B cell (primary cell): ENCODE measurements at regions of chr11 and their contacts with region 1.

Region 1: DNA sequence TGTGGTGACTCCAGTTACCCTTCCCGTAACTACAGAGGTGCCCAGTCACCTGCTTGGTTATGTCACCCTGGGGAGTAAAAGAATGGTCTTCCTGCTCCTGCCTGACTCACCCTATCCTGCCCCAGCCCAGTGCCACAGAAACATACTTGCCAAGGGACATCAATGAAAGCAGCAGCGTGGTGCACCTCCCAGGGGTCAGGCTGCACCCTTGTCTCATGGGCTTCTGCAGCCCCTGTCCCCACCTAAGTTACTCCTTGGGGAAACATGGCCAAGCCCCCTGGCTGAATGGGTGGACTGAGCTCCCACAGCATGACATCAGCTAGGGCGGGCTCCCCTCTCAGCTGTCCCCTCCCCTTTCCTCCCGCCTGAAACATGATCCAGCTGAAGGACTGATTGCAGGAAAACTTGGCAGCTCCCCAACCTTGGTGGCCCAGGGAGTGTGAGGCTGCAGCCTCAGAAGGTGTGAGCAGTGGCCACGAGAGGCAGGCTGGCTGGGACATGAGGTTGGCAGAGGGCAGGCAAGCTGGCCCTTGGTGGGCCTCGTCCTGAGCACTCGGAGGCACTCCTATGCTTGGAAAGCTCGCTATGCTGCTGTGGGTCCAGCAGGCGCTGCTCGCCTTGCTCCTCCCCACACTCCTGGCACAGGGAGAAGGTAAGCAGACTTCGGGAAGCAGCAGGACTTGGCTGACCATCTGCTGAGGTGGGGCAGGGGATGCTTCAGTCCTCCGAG is at the start of gene HTR3A:
- DNase-seq: peak; percentile 16
- ATAC-seq: no peak
- H3K4me3 ChIP-seq: no peak within 1 kb of the TSS
- H3K4me3 Mint-ChIP-seq: peak within 1 kb of the TSS; percentile 48
- H3K27ac ChIP-seq: peak within 1 kb of the TSS in 1 of 2 donors; percentile 29
- H3K27ac Mint-ChIP-seq: peak within 1 kb of the TSS; percentile 91
- H3K4me1 ChIP-seq: peaks cover 56 to 77% of the 10 kb centered on the region in 2 donors
- H3K4me1 Mint-ChIP-seq: peaks cover 66% of the 10 kb centered on the region
- H3K27me3 ChIP-seq: no peaks in the 10 kb centered on the region
- H3K27me3 Mint-ChIP-seq: no peaks in the 10 kb centered on the region
- CTCF ChIP-seq: no peak
- total RNA-seq, gene HTR3A: 13.8 and 16.1 TPM in 2 replicates

Region 2: DNA sequence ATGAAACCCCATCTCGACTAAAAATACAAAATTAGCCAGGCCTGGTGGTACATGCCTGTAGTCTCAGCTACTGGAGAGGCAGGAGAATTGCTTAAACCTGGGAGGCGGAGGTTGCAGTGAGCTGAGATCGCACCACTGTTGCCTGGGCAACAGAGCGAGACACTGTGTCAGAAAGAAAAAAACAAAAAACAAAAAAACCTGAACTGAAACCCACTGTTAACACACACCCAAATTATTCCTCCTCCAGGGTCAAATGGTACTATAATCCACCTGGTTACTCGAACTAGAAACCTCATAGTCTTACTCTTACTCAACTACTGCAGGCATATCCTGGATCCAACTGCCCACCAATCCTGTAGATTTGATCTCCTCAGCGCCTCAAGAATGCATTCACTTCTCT is 135.1 kb before region 1 on chr11:
- CTCF ChIA-PET with region 1: no interaction called
- POLR2A ChIA-PET with region 1: no interaction called
- intact Hi-C with region 1: loop called (anchors 1 kb)
- DNase-seq: peak; percentile 85
- ATAC-seq: peak; percentile 93
- H3K4me3 ChIP-seq: peak overlapping the region in 1 of 5 experiments; percentile 52
- H3K4me3 Mint-ChIP-seq: peak overlapping the region; percentile 78
- H3K27ac ChIP-seq: peak overlapping the region; percentile 92
- H3K27ac Mint-ChIP-seq: peak overlapping the region; percentile 94
- H3K4me1 ChIP-seq: peaks cover 39 to 43% of the 10 kb centered on the region in 2 donors
- H3K4me1 Mint-ChIP-seq: peaks cover 30% of the 10 kb centered on the region
- H3K27me3 ChIP-seq: no peaks in the 10 kb centered on the region
- H3K27me3 Mint-ChIP-seq: no peaks in the 10 kb centered on the region
- CTCF ChIP-seq: no peak

Region 3: DNA sequence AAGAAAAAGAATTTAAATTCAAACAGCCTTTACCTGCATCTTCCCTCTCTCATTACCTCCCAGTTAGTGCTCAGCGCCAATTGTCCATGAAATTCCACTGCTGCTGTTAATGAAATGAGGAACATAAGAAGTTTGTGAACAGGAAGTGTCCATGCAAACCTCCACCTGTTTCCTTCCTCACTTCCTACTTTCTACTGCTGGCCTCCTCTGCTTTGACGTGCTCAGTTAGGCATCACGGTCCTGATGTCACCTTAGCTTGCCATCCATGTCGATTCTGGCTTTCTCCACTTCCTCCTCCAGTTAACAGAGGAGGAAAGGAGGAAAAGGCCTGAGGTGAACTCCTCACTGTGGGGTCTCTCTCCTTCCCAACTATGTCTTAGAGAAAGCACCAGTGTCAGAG is 26.9 kb before region 1 on chr11:
- CTCF ChIA-PET with region 1: interaction called, 7 read pairs
- POLR2A ChIA-PET with region 1: no interaction called
- intact Hi-C with region 1: loop called (anchors 2 kb)
- DNase-seq: peak; percentile 69
- ATAC-seq: peak; percentile 54
- H3K4me3 ChIP-seq: no peak overlapping the region
- H3K4me3 Mint-ChIP-seq: peak overlapping the region; percentile 62
- H3K27ac ChIP-seq: peak overlapping the region; percentile 48 to 59
- H3K27ac Mint-ChIP-seq: peak overlapping the region; percentile 80
- H3K4me1 ChIP-seq: peaks cover 26 to 42% of the 10 kb centered on the region in 2 donors
- H3K4me1 Mint-ChIP-seq: peaks cover 32% of the 10 kb centered on the region
- H3K27me3 ChIP-seq: peaks cover 0 to 3% (median 0%) of the 10 kb centered on the region in 4 experiments
- H3K27me3 Mint-ChIP-seq: peaks cover 7% of the 10 kb centered on the region
- CTCF ChIP-seq: no peak

Region 4: DNA sequence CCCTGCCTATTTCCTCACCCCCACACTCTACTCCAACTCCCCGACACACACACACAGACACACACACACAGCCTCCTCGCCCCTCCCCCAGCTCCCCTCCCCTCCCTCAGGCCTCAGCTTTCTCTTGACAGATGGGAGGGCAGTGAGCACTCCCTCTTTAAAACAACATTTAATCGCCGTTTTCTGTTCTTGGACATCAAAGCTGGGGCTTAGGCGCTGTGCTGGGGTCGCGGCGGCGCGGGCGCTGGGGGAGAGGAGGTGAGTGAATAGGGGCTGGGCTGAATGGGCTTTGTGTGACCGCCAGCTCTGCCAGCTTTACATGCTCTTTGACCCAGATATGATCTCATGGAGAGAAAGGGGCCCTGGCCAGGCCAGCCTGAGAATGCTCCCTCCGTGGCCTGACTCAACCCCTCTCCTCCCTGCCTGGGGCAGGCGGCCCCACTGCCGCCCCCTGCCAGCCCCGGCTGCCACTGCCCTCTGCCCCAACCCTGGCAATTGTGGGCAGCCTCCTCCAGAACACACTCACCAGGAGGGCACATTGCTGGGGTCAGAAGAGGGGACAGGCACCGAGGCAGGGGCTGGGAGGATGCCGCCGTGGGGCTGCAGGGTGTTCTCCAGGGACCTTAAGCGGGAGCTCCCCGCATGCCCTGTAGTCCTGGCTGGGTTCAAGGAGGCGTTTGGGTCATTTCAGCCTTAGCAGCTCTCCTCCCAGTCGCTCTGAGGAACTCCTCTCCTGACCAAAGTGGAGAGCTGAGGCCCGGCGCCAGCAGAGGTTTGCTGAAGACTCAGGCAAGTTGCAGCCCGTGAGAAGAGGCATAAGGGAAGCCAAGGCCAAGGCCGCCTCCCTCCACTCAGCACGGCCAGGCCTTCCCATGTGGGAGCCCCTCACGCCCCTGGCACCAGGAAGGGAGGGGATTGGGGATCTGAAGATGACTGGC is 283.0 kb after region 1 on chr11:
- CTCF ChIA-PET with region 1: interaction called, 55 read pairs
- POLR2A ChIA-PET with region 1: interaction called, 5 read pairs
- intact Hi-C with region 1: loop called (anchors 1 kb)
- DNase-seq: no peak
- ATAC-seq: no peak
- H3K4me3 ChIP-seq: no peak overlapping the region
- H3K4me3 Mint-ChIP-seq: no peak overlapping the region
- H3K27ac ChIP-seq: peak overlapping the region; percentile 84 to 89
- H3K27ac Mint-ChIP-seq: peak overlapping the region; percentile 88
- H3K4me1 ChIP-seq: peaks cover 30 to 34% of the 10 kb centered on the region in 2 donors
- H3K4me1 Mint-ChIP-seq: peaks cover 32% of the 10 kb centered on the region
- H3K27me3 ChIP-seq: peaks cover 0 to 1% (median 0%) of the 10 kb centered on the region in 4 experiments
- H3K27me3 Mint-ChIP-seq: no peaks in the 10 kb centered on the region
- CTCF ChIP-seq: no peak